ENCODE measurements at regions of chr16 and their contacts with region 1.

Region 1: GRCh38 chr16:69217433-69217832 is 30.5 kb downstream of the SNTB2 start:
- DNase-seq: peak; percentile 15
- ATAC-seq: peak; percentile 74; the same call in 1 of the 2 replicates
- H3K4me3 ChIP-seq: no peak overlapping the region
- H3K27ac ChIP-seq: peak overlapping the region; percentile 42; the same call in 1 of the 2 replicates
- H3K4me1 ChIP-seq: peaks cover 45% of the 10 kb centered on the region
- H3K27me3 ChIP-seq: no peaks in the 10 kb centered on the region
- CTCF ChIP-seq: no peak

Region 2: DNA sequence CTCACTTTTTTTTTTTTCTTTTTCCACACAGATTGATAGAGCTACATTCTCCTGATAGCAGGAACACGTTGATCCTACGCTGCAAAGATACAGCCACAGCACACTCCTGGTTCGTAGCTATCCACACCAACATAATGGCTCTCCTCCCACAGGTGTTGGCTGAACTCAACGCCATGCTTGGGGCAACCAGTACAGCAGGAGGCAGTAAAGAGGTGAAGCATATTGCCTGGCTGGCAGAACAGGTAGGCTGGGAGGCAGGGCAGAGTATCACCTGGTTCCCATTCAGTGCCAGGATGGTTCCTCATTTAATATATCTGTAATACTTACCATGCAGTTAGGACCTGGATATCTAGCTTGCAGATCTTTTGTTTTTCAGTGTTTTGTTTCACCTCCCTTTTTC is 42.6 kb after region 1 on chr16:
- CTCF ChIA-PET with region 1: no interaction called
- POLR2A ChIA-PET with region 1: no interaction called
- in situ Hi-C with region 1: no loop called
- intact Hi-C with region 1: no loop called
- DNase-seq: no peak
- ATAC-seq: no peak
- H3K4me3 ChIP-seq: no peak overlapping the region
- H3K27ac ChIP-seq: no peak overlapping the region
- H3K4me1 ChIP-seq: no peaks in the 10 kb centered on the region
- H3K27me3 ChIP-seq: no peaks in the 10 kb centered on the region
- CTCF ChIP-seq: no peak

Region 3: GRCh38 chr16:69301861-69302260 is 84.4 kb after region 1 on chr16:
- CTCF ChIA-PET with region 1: no interaction called
- POLR2A ChIA-PET with region 1: interaction called, 13 read pairs
- in situ Hi-C with region 1: no loop called
- intact Hi-C with region 1: no loop called
- DNase-seq: no peak
- ATAC-seq: no peak
- H3K4me3 ChIP-seq: no peak overlapping the region
- H3K27ac ChIP-seq: no peak overlapping the region
- H3K4me1 ChIP-seq: no peaks in the 10 kb centered on the region
- H3K27me3 ChIP-seq: no peaks in the 10 kb centered on the region
- CTCF ChIP-seq: no peak

Region 4: GRCh38 chr16:69351309-69352027 is 134.0 kb after region 1 on chr16 and contains the start of gene TMED6:
- CTCF ChIA-PET with region 1: no interaction called
- POLR2A ChIA-PET with region 1: no interaction called
- in situ Hi-C with region 1: no loop called
- intact Hi-C with region 1: no loop called
- DNase-seq: no peak
- ATAC-seq: no peak
- H3K4me3 ChIP-seq: no peak within 1 kb of the TSS
- H3K27ac ChIP-seq: no peak within 1 kb of the TSS
- H3K4me1 ChIP-seq: no peaks in the 10 kb centered on the region
- H3K27me3 ChIP-seq: no peaks in the 10 kb centered on the region
- CTCF ChIP-seq: no peak
- total RNA-seq, gene TMED6: 0.36 TPM